HEK293 (cell line): ENCODE measurements at regions of chr1 and their contacts with region 1.

Region 1: GRCh38 chr1:204363335-204364124 is 3.8 kb upstream of the PLEKHA6 start:
- H3K4me3 ChIP-seq: peak overlapping the region; percentile 38
- H3K27ac ChIP-seq: no peak overlapping the region
- H3K4me1 ChIP-seq: no peaks in the 10 kb centered on the region; the same call in 1 of the 2 replicates
- CTCF ChIP-seq: peak; percentile 98

Region 2: GRCh38 chr1:204207136-204207616 is 156.4 kb before region 1 on chr1:
- CTCF ChIA-PET with region 1: interaction called, 29 read pairs
- POLR2A ChIA-PET with region 1: no interaction called
- H3K4me3 ChIP-seq: no peak overlapping the region
- H3K27ac ChIP-seq: no peak overlapping the region
- H3K4me1 ChIP-seq: no peaks in the 10 kb centered on the region
- CTCF ChIP-seq: peak; percentile 85

Region 3: DNA sequence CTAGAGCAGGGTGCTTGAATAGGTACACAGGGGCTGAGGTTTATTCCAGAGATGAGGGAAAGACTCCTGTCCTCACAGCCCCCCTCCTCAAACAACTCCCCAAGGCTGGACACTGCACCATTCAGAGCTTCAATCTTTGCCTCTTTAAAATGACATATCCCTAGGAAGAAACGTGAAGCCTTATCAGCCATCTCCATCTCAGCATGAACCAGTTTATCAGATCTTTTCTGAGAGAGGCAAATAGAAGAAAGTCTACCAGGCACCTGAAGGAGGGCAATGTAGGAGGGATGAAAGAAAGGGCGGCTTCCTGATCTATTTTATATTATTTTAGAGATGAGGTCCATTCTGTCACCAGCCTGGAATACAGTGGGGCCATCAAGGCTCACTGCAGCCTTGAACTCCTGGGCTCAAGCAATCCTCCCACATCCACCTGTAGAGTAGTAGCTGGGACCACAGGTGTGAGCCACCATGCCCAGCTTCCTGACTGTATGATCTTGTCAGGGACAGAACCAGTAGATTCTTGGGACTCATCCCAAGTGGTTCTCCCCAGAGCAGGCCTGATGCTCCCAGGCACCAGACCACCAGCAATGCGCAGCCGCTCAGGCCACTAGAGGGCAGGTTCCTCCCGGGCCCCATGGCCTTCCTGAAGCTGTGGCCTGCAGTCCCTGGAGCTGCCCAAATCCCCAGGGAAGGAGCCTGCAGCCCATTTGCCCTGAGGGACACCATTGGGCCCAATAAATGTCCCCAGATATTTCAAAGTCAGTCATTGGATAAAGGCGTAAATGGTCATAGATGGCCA is 105.4 kb before region 1 on chr1:
- CTCF ChIA-PET with region 1: interaction called, 164 read pairs
- POLR2A ChIA-PET with region 1: no interaction called
- H3K4me3 ChIP-seq: no peak overlapping the region
- H3K27ac ChIP-seq: no peak overlapping the region
- H3K4me1 ChIP-seq: peaks cover 8% of the 10 kb centered on the region; the same call in 1 of the 2 replicates
- CTCF ChIP-seq: peak; percentile 73

Region 4: GRCh38 chr1:204285406-204286305 is 77.9 kb before region 1 on chr1:
- CTCF ChIA-PET with region 1: interaction called, 18 read pairs
- POLR2A ChIA-PET with region 1: interaction called, 3 read pairs
- H3K4me3 ChIP-seq: no peak overlapping the region
- H3K27ac ChIP-seq: no peak overlapping the region
- H3K4me1 ChIP-seq: peaks cover 12% of the 10 kb centered on the region
- CTCF ChIP-seq: no peak

Region 5: DNA sequence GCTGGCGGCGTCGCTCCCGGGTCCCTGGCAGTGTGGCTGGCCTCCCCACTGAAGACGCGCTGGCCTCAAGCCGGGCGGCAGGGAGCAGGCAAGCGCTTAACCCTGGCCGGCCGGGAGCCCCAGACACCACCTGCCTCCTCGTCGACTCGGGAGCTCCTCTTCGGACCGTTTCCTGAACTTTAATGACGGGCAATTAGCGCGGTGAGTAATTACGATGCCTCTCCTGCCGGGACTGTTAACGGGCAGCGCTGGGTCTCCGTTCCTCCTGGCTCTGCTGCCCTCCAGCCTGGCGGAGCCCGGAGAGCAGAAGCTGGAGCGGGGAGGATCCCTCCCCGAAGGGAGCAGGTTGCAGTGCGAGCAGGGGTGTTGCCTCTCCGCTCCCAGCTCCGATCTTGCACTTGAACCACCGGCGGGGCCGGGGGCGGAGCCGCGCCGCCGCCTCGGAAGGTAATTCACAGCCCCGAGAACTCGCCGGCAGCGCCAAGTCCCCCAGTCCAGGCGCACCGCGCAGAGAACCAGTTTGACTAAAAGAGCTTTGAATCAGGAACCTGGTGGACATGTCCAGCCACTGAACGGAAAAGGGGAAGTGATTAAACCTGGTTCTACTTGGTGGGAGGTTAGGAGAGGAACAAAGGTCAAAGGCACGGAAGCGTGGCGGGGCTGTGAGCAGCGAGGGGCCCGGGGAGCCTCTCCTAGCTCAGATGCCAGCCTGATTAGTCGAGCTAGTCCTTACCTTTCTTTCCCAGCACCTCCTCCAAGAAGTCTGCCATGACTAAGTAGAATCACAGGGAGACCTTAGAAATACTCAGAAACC is 14.5 kb after region 1 on chr1:
- CTCF ChIA-PET with region 1: interaction called, 15 read pairs
- POLR2A ChIA-PET with region 1: interaction called, 4 read pairs
- H3K4me3 ChIP-seq: peak overlapping the region; percentile 26
- H3K27ac ChIP-seq: no peak overlapping the region; the same call in 1 of the 2 replicates
- H3K4me1 ChIP-seq: no peaks in the 10 kb centered on the region
- CTCF ChIP-seq: no peak

Region 6: GRCh38 chr1:204506961-204507387 is 143.4 kb after region 1 on chr1:
- CTCF ChIA-PET with region 1: interaction called, 14 read pairs
- POLR2A ChIA-PET with region 1: no interaction called
- H3K4me3 ChIP-seq: peak overlapping the region; percentile 58
- H3K27ac ChIP-seq: peak overlapping the region; percentile 78
- H3K4me1 ChIP-seq: no peaks in the 10 kb centered on the region
- CTCF ChIP-seq: no peak